Ascending aorta (tissue), 2 donors: ENCODE measurements at regions of chr21 and their contacts with region 1.

Region 1: GRCh38 chr21:46025113-46025770 is 43.7 kb downstream of the COL6A1 start:
- DNase-seq: no peak
- H3K4me3 ChIP-seq: no peak overlapping the region
- H3K27ac ChIP-seq: no peak overlapping the region
- H3K4me1 ChIP-seq: peaks cover 3 to 10% of the 10 kb centered on the region in 2 donors
- H3K27me3 ChIP-seq: no peaks in the 10 kb centered on the region
- CTCF ChIP-seq: no peak

Region 2: DNA sequence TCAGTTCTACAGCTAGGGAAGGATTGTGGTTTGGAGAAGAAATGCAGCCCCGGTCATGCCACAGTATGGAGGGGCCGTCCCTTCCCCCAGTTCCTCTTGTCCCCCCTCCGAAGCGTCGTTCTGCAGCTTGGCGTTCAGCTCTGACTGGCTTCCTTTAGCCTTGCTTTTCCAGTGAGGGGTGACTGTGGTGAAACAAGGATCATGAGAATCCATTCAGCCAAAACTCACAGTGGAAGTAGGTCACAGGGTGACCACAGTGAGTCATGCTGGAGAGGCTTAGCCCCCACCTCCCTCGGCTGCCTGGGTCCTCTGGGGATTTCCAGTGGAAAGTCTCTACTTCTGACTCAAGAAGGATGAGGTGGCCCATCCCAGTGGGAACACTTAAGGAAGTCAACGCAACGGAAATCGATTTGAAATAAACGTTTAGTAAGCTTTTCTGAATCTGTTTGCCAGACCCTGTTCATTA is 35.4 kb after region 1 on chr21:
- intact Hi-C with region 1: loop called (anchors 5 kb)
- DNase-seq: peak; percentile 70 to 96
- H3K4me3 ChIP-seq: no peak overlapping the region
- H3K27ac ChIP-seq: peak overlapping the region; percentile 94 to 99
- H3K4me1 ChIP-seq: peaks cover 29 to 45% of the 10 kb centered on the region in 2 donors
- H3K27me3 ChIP-seq: no peaks in the 10 kb centered on the region
- CTCF ChIP-seq: no peak

Region 3: DNA sequence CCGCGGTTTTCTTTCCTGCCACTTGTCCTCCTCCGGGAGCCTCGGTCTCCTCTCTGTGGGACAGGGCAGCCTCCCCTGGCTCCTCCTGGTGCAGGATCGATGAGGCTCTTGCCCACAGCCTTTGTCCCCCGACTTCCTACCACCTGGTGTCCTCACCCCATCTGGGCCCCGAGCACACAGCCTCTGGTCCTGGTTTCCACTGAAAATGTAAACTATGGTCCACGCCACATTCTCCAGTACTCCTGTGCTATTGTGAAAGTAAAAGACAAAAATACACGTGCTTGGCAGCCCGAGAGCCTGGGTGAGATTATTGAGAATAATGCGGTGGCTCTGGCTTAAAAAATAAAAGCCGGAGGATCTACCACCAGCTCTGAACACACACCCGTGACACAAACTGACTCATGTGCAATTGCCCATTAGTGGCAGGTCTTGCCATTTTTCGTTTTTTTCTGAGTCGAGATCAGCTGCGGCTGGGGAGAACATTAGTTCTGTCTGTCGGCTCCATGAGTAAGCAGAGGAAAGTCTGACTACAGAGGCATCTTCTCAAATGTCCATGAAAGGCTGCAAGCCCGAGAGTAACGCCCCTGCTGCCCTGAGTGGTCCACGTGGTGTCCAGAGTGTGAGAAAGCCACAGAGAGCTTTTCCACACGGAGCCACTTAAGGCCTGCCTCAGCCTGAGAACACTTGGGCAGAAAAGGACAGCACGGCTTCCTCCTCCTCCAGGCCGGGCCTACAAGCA is 67.0 kb after region 1 on chr21:
- intact Hi-C with region 1: loop called (anchors 2 kb)
- DNase-seq: peak; percentile 87 to 97
- H3K4me3 ChIP-seq: peak overlapping the region in 1 of 2 donors; percentile 52
- H3K27ac ChIP-seq: peak overlapping the region; percentile 98 to 99
- H3K4me1 ChIP-seq: peaks cover 21 to 22% of the 10 kb centered on the region in 2 donors
- H3K27me3 ChIP-seq: no peaks in the 10 kb centered on the region
- CTCF ChIP-seq: no peak